ENCODE measurements at regions of chrX and their contacts with region 1.

Region 1: GRCh38 chrX:134148172-134148692 is 88.8 kb upstream of the CCDC160 start:
- DNase-seq: no peak
- ATAC-seq: no peak
- H3K4me3 ChIP-seq: no peak overlapping the region
- H3K4me3 Mint-ChIP-seq: no peak overlapping the region
- H3K27ac ChIP-seq: no peak overlapping the region
- H3K27ac Mint-ChIP-seq: no peak overlapping the region
- H3K4me1 ChIP-seq: no peaks in the 10 kb centered on the region
- H3K4me1 Mint-ChIP-seq: no peaks in the 10 kb centered on the region
- H3K27me3 ChIP-seq: no peaks in the 10 kb centered on the region
- H3K27me3 Mint-ChIP-seq: no peaks in the 10 kb centered on the region
- CTCF ChIP-seq: no peak

Region 2: GRCh38 chrX:134163836-134164235 is 15.6 kb after region 1 on chrX:
- CTCF ChIA-PET with region 1: no interaction called
- POLR2A ChIA-PET with region 1: no interaction called
- intact Hi-C with region 1: loop called in 1 of 2 experiments (anchors 1 kb)
- DNase-seq: no peak
- ATAC-seq: no peak
- H3K4me3 ChIP-seq: no peak overlapping the region
- H3K4me3 Mint-ChIP-seq: no peak overlapping the region
- H3K27ac ChIP-seq: no peak overlapping the region
- H3K27ac Mint-ChIP-seq: no peak overlapping the region
- H3K4me1 ChIP-seq: no peaks in the 10 kb centered on the region
- H3K4me1 Mint-ChIP-seq: no peaks in the 10 kb centered on the region
- H3K27me3 ChIP-seq: no peaks in the 10 kb centered on the region
- H3K27me3 Mint-ChIP-seq: no peaks in the 10 kb centered on the region
- CTCF ChIP-seq: no peak

Region 3: GRCh38 chrX:134184936-134185335 is 36.7 kb after region 1 on chrX:
- CTCF ChIA-PET with region 1: no interaction called
- POLR2A ChIA-PET with region 1: no interaction called
- intact Hi-C with region 1: no loop called
- DNase-seq: peak in 1 of 9 experiments; percentile 4
- ATAC-seq: no peak
- H3K4me3 ChIP-seq: no peak overlapping the region
- H3K4me3 Mint-ChIP-seq: no peak overlapping the region
- H3K27ac ChIP-seq: no peak overlapping the region
- H3K27ac Mint-ChIP-seq: no peak overlapping the region
- H3K4me1 ChIP-seq: peaks cover 18% of the 10 kb centered on the region
- H3K4me1 Mint-ChIP-seq: peaks cover 24% of the 10 kb centered on the region
- H3K27me3 ChIP-seq: no peaks in the 10 kb centered on the region
- H3K27me3 Mint-ChIP-seq: peaks cover 6% of the 10 kb centered on the region
- CTCF ChIP-seq: no peak